ENCODE measurements at regions of chr12 and their contacts with region 1.

Region 1: GRCh38 chr12:53984901-53985709 is at the start of gene HOXC10:
- DNase-seq: peak; percentile 95
- H3K4me3 Mint-ChIP-seq: peak within 1 kb of the TSS; percentile 38
- H3K27ac Mint-ChIP-seq: no peak within 1 kb of the TSS
- H3K4me1 Mint-ChIP-seq: peaks cover 28% of the 10 kb centered on the region
- H3K27me3 Mint-ChIP-seq: peaks cover 91% of the 10 kb centered on the region
- total RNA-seq, gene HOXC10: not detected

Region 2: GRCh38 chr12:53190108-53190729 is 794.9 kb before region 1 on chr12:
- CTCF ChIA-PET with region 1: no interaction called
- intact Hi-C with region 1: no loop called
- DNase-seq: peak; percentile 61
- H3K4me3 Mint-ChIP-seq: no peak overlapping the region
- H3K27ac Mint-ChIP-seq: peak overlapping the region; percentile 32
- H3K4me1 Mint-ChIP-seq: peaks cover 13% of the 10 kb centered on the region
- H3K27me3 Mint-ChIP-seq: no peaks in the 10 kb centered on the region

Region 3: DNA sequence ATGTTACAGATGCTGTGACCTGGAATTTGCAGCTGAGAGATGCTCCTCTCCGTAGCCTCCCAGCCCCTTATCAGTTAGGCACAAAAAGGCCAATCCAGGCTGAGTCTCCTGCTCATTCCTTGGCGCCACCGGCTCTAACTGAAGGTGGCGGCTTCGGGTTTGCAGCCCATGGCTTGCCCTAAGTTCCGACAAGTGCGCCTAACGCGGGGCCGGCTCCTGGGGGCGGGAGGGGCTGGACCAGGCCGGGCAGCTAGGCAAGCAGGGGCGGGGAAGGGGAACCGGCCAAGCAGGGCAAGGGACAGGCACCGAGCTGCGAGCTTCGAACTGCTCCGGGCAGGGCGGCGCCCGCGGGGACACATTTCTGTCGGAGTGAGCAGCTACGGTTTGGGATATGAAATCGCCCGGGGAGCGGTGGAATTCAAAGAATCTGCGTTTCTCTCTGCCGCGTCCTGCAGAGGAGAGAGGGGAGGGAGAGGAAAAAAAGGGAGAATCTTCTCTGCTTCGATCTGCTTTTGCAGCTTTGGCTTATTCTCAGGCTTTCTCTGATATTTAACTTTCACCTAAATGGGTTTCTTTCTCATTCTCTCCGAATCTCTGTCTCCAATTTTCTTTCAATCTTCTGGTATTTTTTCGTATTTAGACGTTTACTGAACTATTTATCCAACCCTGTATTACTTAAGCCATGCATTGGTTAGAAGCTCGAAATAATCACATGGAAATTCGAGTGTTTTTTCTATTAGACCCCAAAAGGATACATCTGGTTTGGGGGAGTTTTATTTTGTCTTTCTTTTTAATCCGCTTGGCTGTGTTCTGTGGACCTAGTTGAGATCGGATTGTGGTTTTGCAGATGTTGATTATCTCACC is 32.0 kb before region 1 on chr12:
- CTCF ChIA-PET with region 1: no interaction called
- intact Hi-C with region 1: loop called (anchors 5 kb)
- DNase-seq: no peak
- H3K4me3 Mint-ChIP-seq: no peak overlapping the region
- H3K27ac Mint-ChIP-seq: no peak overlapping the region
- H3K4me1 Mint-ChIP-seq: peaks cover 40% of the 10 kb centered on the region
- H3K27me3 Mint-ChIP-seq: peaks cover 91% of the 10 kb centered on the region

Region 4: GRCh38 chr12:54005853-54006686 is 21.0 kb after region 1 on chr12:
- CTCF ChIA-PET with region 1: interaction called, 38 read pairs
- intact Hi-C with region 1: loop called (anchors 1 kb)
- DNase-seq: peak; percentile 91
- H3K4me3 Mint-ChIP-seq: peak overlapping the region; percentile 58
- H3K27ac Mint-ChIP-seq: no peak overlapping the region
- H3K4me1 Mint-ChIP-seq: peaks cover 26% of the 10 kb centered on the region
- H3K27me3 Mint-ChIP-seq: peaks cover 90% of the 10 kb centered on the region

Region 5: DNA sequence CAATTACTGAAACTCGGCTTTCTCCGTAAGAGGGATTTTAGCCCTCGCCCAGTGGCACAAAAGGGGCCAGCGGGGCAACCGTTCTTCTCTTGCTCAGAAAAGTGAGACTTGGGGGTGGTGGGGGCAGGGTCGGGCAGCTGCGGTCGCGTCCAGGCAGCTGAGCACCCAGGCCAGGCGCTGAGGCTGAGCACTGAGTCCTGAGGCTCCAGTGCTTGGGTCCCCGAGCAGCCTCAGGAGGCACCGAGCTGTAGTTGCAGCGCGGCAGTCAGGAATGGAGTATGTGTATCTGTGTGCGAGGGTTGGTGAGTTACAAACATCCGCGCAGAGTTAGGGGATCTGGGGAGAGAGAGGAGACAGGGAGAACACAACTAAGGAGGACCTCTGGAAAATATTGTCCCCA is 39.0 kb after region 1 on chr12:
- CTCF ChIA-PET with region 1: no interaction called
- intact Hi-C with region 1: no loop called
- DNase-seq: no peak
- H3K4me3 Mint-ChIP-seq: no peak overlapping the region
- H3K27ac Mint-ChIP-seq: no peak overlapping the region
- H3K4me1 Mint-ChIP-seq: peaks cover 20% of the 10 kb centered on the region
- H3K27me3 Mint-ChIP-seq: peaks cover 83% of the 10 kb centered on the region

Region 6: GRCh38 chr12:54201001-54201794 is 216.1 kb after region 1 on chr12:
- CTCF ChIA-PET with region 1: interaction called, 8 read pairs
- intact Hi-C with region 1: loop called (anchors 2 kb)
- DNase-seq: peak; percentile 75
- H3K4me3 Mint-ChIP-seq: no peak overlapping the region
- H3K27ac Mint-ChIP-seq: no peak overlapping the region
- H3K4me1 Mint-ChIP-seq: no peaks in the 10 kb centered on the region
- H3K27me3 Mint-ChIP-seq: peaks cover 40% of the 10 kb centered on the region

Measured in activated naive CD4-positive, alpha-beta T cell treated with anti-CD3 and anti-CD28 coated beads for 36 hours (primary cell).